PC-9 (cell line): ENCODE measurements at regions of chr9 and their contacts with region 1.

Region 1: DNA sequence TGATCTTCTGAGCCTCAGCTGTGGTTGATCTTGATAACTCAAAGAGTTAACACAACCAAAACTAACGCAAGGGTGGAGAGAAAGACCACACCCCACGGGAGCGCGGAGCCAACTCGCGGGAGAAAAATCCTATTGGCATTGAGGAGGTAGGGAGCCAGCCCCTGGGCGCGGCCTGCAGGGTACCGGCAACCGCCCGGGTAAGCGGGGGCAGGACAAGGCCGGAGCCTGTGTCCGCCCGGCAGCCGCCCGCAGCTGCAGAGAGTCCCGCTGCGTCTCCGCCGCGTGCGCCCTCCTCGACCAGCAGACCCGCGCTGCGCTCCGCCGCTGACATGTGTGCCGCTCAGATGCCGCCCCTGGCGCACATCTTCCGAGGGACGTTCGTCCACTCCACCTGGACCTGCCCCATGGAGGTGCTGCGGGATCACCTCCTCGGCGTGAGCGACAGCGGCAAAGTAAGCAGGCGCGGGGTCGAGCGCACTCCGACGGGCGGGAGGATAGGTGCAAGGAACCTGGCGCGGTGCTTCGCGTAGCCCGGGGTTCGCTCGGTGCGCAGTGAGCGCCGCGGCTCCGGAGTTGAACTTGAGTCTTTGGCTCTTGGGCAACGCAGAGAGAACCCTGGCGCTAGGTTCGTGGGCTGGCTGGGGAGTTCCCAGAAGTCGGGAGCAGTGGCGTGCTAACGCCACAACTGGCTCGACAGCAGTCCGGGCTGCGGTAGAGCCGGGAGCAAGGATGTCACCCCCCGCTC is at the start of gene GDA:
- DNase-seq: peak; percentile 65 to 90
- H3K4me3 ChIP-seq: peak within 1 kb of the TSS; percentile 68
- H3K27ac ChIP-seq: peak within 1 kb of the TSS; percentile 83
- H3K4me1 ChIP-seq: peaks cover 69% of the 10 kb centered on the region
- H3K27me3 ChIP-seq: no peaks in the 10 kb centered on the region
- CTCF ChIP-seq: no peak
- total RNA-seq, gene GDA: 98.1 and 142 TPM in 2 replicates

Region 2: DNA sequence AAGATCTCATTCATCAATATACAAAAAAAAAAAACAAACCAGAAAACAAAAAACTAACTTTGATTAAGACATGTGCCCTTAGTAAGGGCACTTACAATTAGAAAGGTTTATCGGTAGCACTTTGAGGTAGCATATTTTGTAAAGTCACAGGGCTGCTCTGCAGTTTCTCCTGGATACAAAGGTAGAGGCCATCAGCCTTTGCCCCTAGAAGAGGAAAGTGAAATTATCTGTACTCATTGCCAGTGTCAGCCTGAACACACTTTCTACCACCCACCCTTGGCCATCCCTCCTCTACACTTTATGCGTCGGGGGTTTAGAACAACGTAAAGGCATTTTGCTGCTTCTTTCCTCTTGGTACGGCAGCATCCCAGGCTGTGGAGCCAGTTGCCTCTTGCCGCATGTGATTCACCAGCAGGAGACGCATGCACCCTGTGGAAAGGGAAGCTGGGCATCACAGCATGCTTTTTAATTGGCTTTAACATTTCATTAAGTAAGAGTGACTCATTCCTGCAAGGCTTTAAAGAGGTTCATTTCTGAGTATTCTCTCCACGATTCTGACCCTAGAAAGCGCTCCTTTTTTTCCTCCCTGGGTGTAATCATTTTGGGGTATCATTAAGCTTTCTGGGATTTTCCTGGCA is 465.7 kb before region 1 on chr9:
- CTCF ChIA-PET with region 1: interaction called, 3 read pairs
- POLR2A ChIA-PET with region 1: no interaction called
- intact Hi-C with region 1: loop called (anchors 5 kb)
- DNase-seq: no peak
- H3K4me3 ChIP-seq: no peak overlapping the region
- H3K27ac ChIP-seq: no peak overlapping the region
- H3K4me1 ChIP-seq: peaks cover 88% of the 10 kb centered on the region
- H3K27me3 ChIP-seq: no peaks in the 10 kb centered on the region
- CTCF ChIP-seq: no peak

Region 3: GRCh38 chr9:72038890-72039410 is 110.5 kb before region 1 on chr9:
- CTCF ChIA-PET with region 1: interaction called, 11 read pairs
- POLR2A ChIA-PET with region 1: interaction called, 9 read pairs
- intact Hi-C with region 1: loop called (anchors 1 kb)
- DNase-seq: peak; percentile 46 to 82
- H3K4me3 ChIP-seq: no peak overlapping the region
- H3K27ac ChIP-seq: no peak overlapping the region
- H3K4me1 ChIP-seq: 0 out of 2 replicates have a peak, but pooled peaks cover 6% of the 10 kb centered on the region
- H3K27me3 ChIP-seq: no peaks in the 10 kb centered on the region
- CTCF ChIP-seq: peak; percentile 97

Region 4: DNA sequence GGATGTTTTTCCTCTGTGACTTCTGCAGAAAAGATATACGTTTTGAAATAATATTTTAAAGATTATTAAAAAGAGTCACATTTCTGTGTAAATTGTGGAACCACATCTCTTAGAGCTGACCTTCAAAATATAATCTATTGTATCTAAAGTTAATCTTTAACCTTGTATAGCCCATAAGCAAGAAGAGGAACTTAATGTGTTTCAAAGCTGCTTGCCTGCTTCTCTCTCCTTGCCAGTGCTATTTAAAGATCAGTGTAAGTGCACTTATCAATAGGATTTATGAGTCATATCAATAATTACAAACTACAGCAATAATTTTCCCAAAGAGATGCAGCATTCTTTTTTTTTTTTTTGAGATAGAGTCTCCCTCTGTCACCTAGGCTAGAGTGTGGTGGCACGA is 29.6 kb before region 1 on chr9:
- CTCF ChIA-PET with region 1: no interaction called
- POLR2A ChIA-PET with region 1: interaction called, 10 read pairs
- intact Hi-C with region 1: no loop called
- DNase-seq: no peak
- H3K4me3 ChIP-seq: no peak overlapping the region
- H3K27ac ChIP-seq: no peak overlapping the region
- H3K4me1 ChIP-seq: no peaks in the 10 kb centered on the region
- H3K27me3 ChIP-seq: no peaks in the 10 kb centered on the region
- CTCF ChIP-seq: no peak

Region 5: DNA sequence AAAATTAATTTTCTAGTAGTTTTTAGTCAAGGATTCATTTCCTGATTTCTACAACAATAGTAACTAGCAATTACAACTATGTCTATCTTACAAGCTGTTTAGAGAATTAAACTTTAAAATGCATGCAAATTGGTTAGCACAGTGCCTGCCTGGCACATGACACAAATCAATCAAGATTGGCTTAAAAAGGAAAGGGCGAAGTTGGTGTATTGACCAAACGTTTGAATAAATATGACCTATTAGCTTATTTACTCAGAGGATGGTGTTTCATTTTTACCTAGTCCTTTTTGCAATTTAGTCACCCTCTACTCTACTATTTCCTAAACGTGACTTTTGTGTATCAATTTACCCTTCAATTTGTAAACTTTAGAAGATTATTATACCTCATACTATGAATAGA is 83.4 kb after region 1 on chr9:
- CTCF ChIA-PET with region 1: interaction called, 3 read pairs
- POLR2A ChIA-PET with region 1: interaction called, 10 read pairs
- intact Hi-C with region 1: no loop called
- DNase-seq: no peak
- H3K4me3 ChIP-seq: no peak overlapping the region
- H3K27ac ChIP-seq: no peak overlapping the region
- H3K4me1 ChIP-seq: no peaks in the 10 kb centered on the region
- H3K27me3 ChIP-seq: no peaks in the 10 kb centered on the region
- CTCF ChIP-seq: no peak

Region 6: DNA sequence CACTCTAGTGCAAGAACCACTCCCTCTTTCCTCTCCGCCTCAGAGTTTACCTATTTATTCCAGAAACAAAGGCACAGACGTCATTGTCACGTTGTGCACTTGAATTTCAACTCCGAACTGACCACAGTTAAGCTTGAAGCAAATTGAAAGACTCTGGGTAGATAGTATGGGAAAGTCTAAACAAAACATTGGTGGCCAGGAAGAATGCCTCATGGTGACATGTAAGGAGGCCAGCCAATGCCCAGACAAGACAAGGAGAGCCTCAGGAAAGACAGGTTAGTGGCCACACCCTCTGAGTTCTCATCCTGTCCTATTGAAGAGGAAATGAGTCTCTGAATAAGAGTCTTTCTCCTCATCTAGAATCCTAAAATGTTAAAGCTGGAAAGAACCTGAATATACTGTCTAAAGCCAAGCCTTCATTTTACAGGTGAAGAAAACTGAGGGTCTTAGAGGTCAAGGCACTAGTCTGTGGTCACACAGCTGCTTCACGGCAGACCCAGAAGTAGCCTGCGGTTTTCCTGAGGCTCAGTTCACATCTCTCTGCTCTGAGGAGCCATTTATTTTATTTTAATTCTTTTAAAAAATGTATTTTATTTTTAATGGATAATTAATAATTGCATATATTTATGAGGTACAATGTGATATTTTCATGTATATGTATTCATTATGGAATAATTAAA is 185.4 kb after region 1 on chr9:
- CTCF ChIA-PET with region 1: no interaction called
- POLR2A ChIA-PET with region 1: no interaction called
- intact Hi-C with region 1: no loop called
- DNase-seq: no peak
- H3K4me3 ChIP-seq: no peak overlapping the region
- H3K27ac ChIP-seq: no peak overlapping the region
- H3K4me1 ChIP-seq: no peaks in the 10 kb centered on the region
- H3K27me3 ChIP-seq: no peaks in the 10 kb centered on the region
- CTCF ChIP-seq: no peak

Region 7: DNA sequence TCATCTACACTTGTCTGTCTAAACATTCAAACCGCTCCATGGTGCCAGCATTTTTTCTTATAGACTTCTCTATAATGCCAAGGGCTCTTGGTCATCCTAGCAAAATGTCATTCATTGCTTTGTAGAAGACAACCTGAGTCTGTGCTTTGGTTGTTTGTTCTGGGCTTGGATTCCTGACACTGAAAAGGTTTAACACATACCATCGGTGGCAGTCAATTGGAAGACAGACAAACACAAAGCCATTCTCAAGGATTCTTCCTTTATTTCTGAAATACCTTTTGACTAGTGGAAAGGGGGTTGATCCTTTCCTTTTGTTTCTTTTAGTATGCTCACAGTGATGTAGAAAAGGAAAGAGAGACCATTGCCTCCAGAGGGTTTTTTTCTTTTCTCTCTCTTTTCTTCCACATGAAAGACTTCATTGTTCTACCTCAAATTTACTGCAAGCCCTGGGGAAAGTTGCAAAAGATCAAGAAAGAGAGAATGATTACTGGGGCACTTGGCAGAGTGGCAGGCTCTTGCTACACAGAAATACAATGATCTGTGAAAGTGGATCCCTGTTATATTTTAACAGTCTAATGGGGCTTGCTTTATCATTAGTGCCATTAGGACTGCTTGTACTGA is 305.6 kb after region 1 on chr9:
- CTCF ChIA-PET with region 1: no interaction called
- POLR2A ChIA-PET with region 1: no interaction called
- intact Hi-C with region 1: no loop called
- DNase-seq: no peak
- H3K4me3 ChIP-seq: no peak overlapping the region
- H3K27ac ChIP-seq: no peak overlapping the region
- H3K4me1 ChIP-seq: peaks cover 18% of the 10 kb centered on the region; the same call in 1 of the 2 replicates
- H3K27me3 ChIP-seq: no peaks in the 10 kb centered on the region
- CTCF ChIP-seq: no peak

Region 8: GRCh38 chr9:72577212-72577753 is 427.9 kb after region 1 on chr9:
- CTCF ChIA-PET with region 1: no interaction called
- POLR2A ChIA-PET with region 1: no interaction called
- intact Hi-C with region 1: loop called (anchors 10 kb)
- DNase-seq: peak; percentile 59 to 95
- H3K4me3 ChIP-seq: peak overlapping the region; percentile 43; the same call in 1 of the 2 replicates
- H3K27ac ChIP-seq: peak overlapping the region; percentile 95
- H3K4me1 ChIP-seq: peaks cover 89% of the 10 kb centered on the region
- H3K27me3 ChIP-seq: no peaks in the 10 kb centered on the region
- CTCF ChIP-seq: no peak

Region 9: GRCh38 chr9:73149371-73150067 is 1000.1 kb after region 1 on chr9:
- CTCF ChIA-PET with region 1: no interaction called
- POLR2A ChIA-PET with region 1: no interaction called
- intact Hi-C with region 1: loop called (anchors 10 kb)
- DNase-seq: peak in 1 of 2 experiments; percentile 81
- H3K4me3 ChIP-seq: no peak overlapping the region; the same call in 1 of the 2 replicates
- H3K27ac ChIP-seq: peak overlapping the region; percentile 86
- H3K4me1 ChIP-seq: peaks cover 67% of the 10 kb centered on the region
- H3K27me3 ChIP-seq: no peaks in the 10 kb centered on the region
- CTCF ChIP-seq: no peak